Gastrocnemius medialis (tissue), 4 donors: ENCODE measurements at regions of chr4 and their contacts with region 1.

Region 1: DNA sequence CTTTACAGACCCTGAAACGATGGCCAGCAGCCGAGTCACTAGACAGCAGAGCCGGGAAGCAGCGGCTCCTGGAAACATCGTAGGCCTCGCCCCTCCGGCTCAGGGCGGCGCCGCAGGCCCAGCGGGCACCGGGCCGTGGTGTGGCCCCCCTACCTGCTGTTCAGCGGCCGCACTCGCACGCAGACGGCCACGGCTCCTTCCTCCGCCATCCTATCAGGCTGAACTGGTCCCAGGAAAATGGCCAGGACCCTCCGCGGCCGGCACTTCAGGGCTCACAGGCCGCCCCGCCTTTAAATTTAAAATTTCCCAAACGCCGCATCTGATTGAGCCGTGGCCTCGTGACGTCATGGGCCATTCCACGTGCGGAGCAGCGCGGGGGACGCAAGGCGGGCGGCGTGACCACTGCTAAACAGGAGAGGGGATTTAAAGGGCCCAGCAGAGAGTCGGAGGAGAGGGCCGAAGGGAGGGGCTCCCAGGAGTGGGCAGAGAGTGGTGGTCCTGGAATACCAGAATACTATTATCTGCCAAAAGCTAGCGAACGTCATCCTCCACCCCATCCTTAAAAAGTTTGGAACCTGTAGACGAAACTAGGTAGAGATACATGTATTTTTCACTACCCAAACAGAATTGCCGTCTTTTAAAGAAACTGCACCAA is at the start of gene CENPE:
- DNase-seq: peak; percentile 56 to 69
- ATAC-seq: peak; percentile 95
- H3K4me3 ChIP-seq: peak within 1 kb of the TSS; percentile 69 to 91 (median 80)
- H3K27ac ChIP-seq: peak within 1 kb of the TSS; percentile 31 to 68 (median 58)
- H3K4me1 ChIP-seq: peaks cover 4 to 7% of the 10 kb centered on the region in 2 donors
- H3K27me3 ChIP-seq: no peaks in the 10 kb centered on the region
- CTCF ChIP-seq: no peak
- POLR2A ChIP-seq: no peak
- total RNA-seq, gene CENPE: 0.15 to 0.63 (median 0.18) TPM

Region 2: GRCh38 chr4:102439236-102439614 is 759.0 kb before region 1 on chr4:
- in situ Hi-C with region 1: no loop called
- intact Hi-C with region 1: loop called (anchors 10 kb)
- DNase-seq: peak in 1 of 2 donors; percentile 23
- ATAC-seq: peak; percentile 89 to 97
- H3K4me3 ChIP-seq: peak overlapping the region in 1 of 4 donors; percentile 18
- H3K27ac ChIP-seq: peak overlapping the region; percentile 58 to 70 (median 66)
- H3K4me1 ChIP-seq: peaks cover 15 to 18% of the 10 kb centered on the region in 2 donors
- H3K27me3 ChIP-seq: no peaks in the 10 kb centered on the region
- CTCF ChIP-seq: no peak
- POLR2A ChIP-seq: no peak

Region 3: GRCh38 chr4:102981005-102981404 is 217.2 kb before region 1 on chr4:
- in situ Hi-C with region 1: no loop called
- intact Hi-C with region 1: no loop called
- DNase-seq: no peak
- ATAC-seq: no peak
- H3K4me3 ChIP-seq: no peak overlapping the region
- H3K27ac ChIP-seq: no peak overlapping the region
- H3K4me1 ChIP-seq: no peaks in the 10 kb centered on the region
- H3K27me3 ChIP-seq: no peaks in the 10 kb centered on the region
- CTCF ChIP-seq: no peak
- POLR2A ChIP-seq: no peak